ENCODE measurements at regions of chr17 and their contacts with region 1.

Region 1: DNA sequence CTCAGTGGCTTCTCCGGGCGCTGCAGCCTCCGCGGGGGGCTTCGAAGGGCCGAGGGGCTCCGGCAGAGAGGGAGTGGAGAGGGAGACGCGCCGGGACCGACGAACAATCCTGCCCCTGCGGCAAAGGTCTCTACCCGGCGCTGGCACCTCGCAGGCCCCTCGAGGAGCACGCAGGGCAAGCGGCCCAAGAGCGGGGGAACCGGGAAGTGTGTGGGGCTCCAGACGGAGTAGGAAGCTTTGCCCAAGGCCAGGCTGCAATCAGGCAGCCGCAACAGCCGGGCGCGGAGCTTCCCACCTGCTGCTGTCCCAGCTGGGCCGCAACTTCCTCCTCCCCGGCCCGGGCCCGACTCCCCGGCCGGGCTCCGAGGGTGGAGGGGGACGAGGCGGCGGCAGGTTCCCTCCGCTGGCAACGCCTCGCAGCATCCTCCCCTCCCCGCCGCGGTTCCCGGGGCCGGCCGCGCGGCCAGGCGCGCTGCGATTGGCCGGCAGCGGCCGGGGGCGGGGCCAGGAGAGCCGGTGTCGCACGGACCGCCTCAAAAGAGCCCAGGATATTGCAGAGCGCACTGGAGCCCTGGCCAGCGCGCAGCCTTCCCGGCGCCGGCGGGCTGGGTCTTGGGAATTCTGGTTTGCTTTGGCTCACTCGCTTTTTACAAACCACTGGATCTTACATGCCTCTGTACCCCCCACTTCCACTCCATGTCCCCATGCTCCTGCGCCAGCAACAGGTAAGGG is at the start of gene KCNJ2:
- DNase-seq: peak; percentile 84 to 89
- ATAC-seq: peak; percentile 72 to 80
- H3K4me3 ChIP-seq: peak within 1 kb of the TSS; percentile 82 to 90 (median 87)
- H3K27ac ChIP-seq: peak within 1 kb of the TSS; percentile 92 to 97 (median 96)
- H3K4me1 ChIP-seq: peaks cover 40% of the 10 kb centered on the region in 2 donors
- H3K27me3 ChIP-seq: no peaks in the 10 kb centered on the region
- CTCF ChIP-seq: peak in 1 of 5 experiments; percentile 30
- POLR2A ChIP-seq: peak; percentile 99
- total RNA-seq, gene KCNJ2: 7.3 to 18.9 (median 10.6) TPM

Region 2: GRCh38 chr17:69335058-69335457 is 834.1 kb before region 1 on chr17:
- in situ Hi-C with region 1: loop called in 1 of 4 experiments (anchors 25 kb)
- intact Hi-C with region 1: loop called (anchors 5 kb)
- DNase-seq: no peak
- ATAC-seq: peak; percentile 50 to 80
- H3K4me3 ChIP-seq: peak overlapping the region in 2 of 4 donors; percentile 22 to 27
- H3K27ac ChIP-seq: peak overlapping the region in 3 of 4 donors; percentile 60 to 97 (median 90)
- H3K4me1 ChIP-seq: peaks cover 0 to 17% of the 10 kb centered on the region in 2 donors
- H3K27me3 ChIP-seq: no peaks in the 10 kb centered on the region
- CTCF ChIP-seq: peak; percentile 66 to 82 (median 71)
- POLR2A ChIP-seq: no peak

Region 3: GRCh38 chr17:69581061-69581961 is 587.8 kb before region 1 on chr17:
- in situ Hi-C with region 1: loop called in 2 of 4 experiments (anchors 25 kb)
- intact Hi-C with region 1: no loop called
- DNase-seq: no peak
- ATAC-seq: no peak
- H3K4me3 ChIP-seq: peak overlapping the region in 3 of 4 donors; percentile 21 to 31 (median 24)
- H3K27ac ChIP-seq: peak overlapping the region in 1 of 4 donors; percentile 15
- H3K4me1 ChIP-seq: peaks cover 0 to 4% of the 10 kb centered on the region in 2 donors
- H3K27me3 ChIP-seq: no peaks in the 10 kb centered on the region
- CTCF ChIP-seq: no peak
- POLR2A ChIP-seq: no peak

Region 4: GRCh38 chr17:69733171-69734012 is 435.8 kb before region 1 on chr17:
- in situ Hi-C with region 1: loop called in 1 of 4 experiments (anchors 25 kb)
- intact Hi-C with region 1: loop called (anchors 2 kb)
- DNase-seq: peak; percentile 82 to 91
- ATAC-seq: peak; percentile 100
- H3K4me3 ChIP-seq: no peak overlapping the region
- H3K27ac ChIP-seq: peak overlapping the region; percentile 74 to 83 (median 78)
- H3K4me1 ChIP-seq: peaks cover 32 to 40% of the 10 kb centered on the region in 2 donors
- H3K27me3 ChIP-seq: no peaks in the 10 kb centered on the region
- CTCF ChIP-seq: no peak
- POLR2A ChIP-seq: no peak

Region 5: GRCh38 chr17:70089513-70090148 is 79.5 kb before region 1 on chr17:
- in situ Hi-C with region 1: no loop called
- intact Hi-C with region 1: no loop called
- DNase-seq: no peak
- ATAC-seq: no peak
- H3K4me3 ChIP-seq: no peak overlapping the region
- H3K27ac ChIP-seq: no peak overlapping the region
- H3K4me1 ChIP-seq: no peaks in the 10 kb centered on the region
- H3K27me3 ChIP-seq: no peaks in the 10 kb centered on the region
- CTCF ChIP-seq: no peak
- POLR2A ChIP-seq: no peak

Region 6: DNA sequence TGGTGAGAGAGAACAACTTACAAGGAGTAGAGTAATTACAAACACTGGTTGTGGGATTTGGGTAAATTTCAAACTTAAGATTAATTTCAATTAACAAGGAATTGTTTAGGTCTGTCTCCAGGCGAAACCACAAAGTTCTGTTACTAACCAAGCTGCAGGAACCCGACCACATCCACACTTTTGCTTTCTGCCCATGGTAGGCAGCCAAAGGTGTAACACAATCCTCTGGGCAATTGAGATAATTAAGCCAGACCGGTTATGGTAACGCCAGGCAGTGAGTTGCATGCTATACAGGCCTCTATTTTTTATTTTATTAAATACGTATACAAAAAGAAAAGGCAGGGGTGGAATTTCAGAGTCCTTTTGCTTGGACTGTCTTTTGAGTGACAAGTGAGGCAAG is 12.2 kb after region 1 on chr17:
- in situ Hi-C with region 1: no loop called
- intact Hi-C with region 1: loop called (anchors 1 kb)
- DNase-seq: peak; percentile 30 to 45
- ATAC-seq: peak; percentile 82 to 88
- H3K4me3 ChIP-seq: peak overlapping the region in 1 of 4 donors; percentile 24
- H3K27ac ChIP-seq: peak overlapping the region; percentile 70 to 97 (median 84)
- H3K4me1 ChIP-seq: peaks cover 86 to 90% of the 10 kb centered on the region in 2 donors
- H3K27me3 ChIP-seq: no peaks in the 10 kb centered on the region
- CTCF ChIP-seq: no peak
- POLR2A ChIP-seq: no peak

Region 7: DNA sequence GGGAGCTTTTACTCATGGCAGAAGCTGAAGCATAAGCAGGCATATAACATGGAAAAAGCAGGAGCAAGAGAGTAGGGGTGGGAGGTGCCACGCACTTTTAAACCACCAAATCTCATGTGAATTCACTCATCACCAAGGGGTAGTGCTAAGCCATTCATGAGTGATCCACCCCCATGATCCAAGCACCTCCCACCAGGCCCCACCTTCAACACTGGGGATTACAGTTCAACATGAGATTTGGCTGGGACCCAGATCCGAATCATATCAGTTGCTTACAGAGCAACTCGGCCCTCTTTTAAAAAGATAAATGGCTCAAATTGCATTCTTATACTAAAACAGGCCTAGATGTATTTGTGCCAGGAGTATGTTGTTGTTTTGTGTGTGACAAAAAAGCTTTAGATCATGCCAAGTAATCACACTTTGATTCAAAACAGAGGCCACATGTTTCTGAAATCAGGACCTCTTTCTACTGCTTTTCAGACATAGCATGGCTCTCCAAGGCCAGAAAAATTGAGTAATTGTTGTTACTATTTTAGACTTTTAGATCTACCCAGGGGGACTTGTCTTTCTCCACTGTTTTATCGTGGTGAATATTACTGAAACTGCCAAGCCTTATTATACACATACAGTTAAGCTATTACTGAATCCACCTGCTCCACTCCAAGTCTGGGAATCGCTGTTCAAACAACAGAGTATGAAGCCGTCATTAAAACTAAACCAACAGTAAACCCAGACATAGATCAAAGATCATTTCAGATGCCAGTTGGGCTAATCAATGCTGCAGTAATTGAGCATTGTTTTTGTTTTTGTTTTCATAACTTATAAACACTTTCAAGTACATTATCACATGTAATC is 163.4 kb after region 1 on chr17:
- in situ Hi-C with region 1: no loop called
- intact Hi-C with region 1: no loop called
- DNase-seq: no peak
- ATAC-seq: no peak
- H3K4me3 ChIP-seq: no peak overlapping the region
- H3K27ac ChIP-seq: no peak overlapping the region
- H3K4me1 ChIP-seq: peaks cover 8 to 10% of the 10 kb centered on the region in 2 donors
- H3K27me3 ChIP-seq: no peaks in the 10 kb centered on the region
- CTCF ChIP-seq: no peak
- POLR2A ChIP-seq: no peak

Region 8: GRCh38 chr17:70552230-70552981 is 383.3 kb after region 1 on chr17:
- in situ Hi-C with region 1: no loop called
- intact Hi-C with region 1: loop called (anchors 5 kb)
- DNase-seq: peak in 1 of 2 donors; percentile 3
- ATAC-seq: peak in 1 of 2 donors; percentile 73
- H3K4me3 ChIP-seq: no peak overlapping the region
- H3K27ac ChIP-seq: no peak overlapping the region
- H3K4me1 ChIP-seq: no peaks in the 10 kb centered on the region
- H3K27me3 ChIP-seq: no peaks in the 10 kb centered on the region
- CTCF ChIP-seq: peak in 4 of 5 experiments; percentile 50 to 62 (median 58)
- POLR2A ChIP-seq: no peak